GM12878 (cell line): ENCODE measurements at regions of chr2 and their contacts with region 1.

Region 1: GRCh38 chr2:45935791-45936622 is 284.5 kb downstream of the PRKCE start:
- DNase-seq: no peak
- ATAC-seq: peak; percentile 94
- H3K4me3 ChIP-seq: no peak overlapping the region
- H3K27ac ChIP-seq: peak overlapping the region; percentile 48
- H3K4me1 ChIP-seq: peaks cover 7% of the 10 kb centered on the region
- H3K27me3 ChIP-seq: no peaks in the 10 kb centered on the region
- CTCF ChIP-seq: peak; percentile 67 to 91 (median 70)
- EP300 ChIP-seq: no peak
- POLR2A ChIP-seq: no peak
- RAD21 ChIP-seq: peak; percentile 95

Region 2: DNA sequence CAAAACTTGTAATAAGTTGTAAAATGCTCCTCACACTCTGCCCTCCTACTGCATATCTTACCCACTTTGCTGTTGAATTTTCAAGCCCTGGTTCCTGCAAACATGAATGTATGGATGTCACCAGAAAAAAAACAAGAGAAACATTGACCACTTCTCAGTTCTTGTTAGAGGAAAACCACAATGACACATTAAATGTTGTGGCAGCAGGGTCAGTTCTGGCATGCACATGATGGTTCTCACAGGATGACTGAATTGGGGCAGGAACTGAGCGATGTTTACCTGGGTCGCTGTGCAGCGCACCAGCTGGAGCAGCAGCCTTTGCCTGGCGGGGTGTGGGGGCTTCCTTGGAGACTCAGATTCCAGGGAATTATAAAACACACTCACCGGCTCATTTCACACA is 298.6 kb before region 1 on chr2:
- CTCF ChIA-PET with region 1: interaction called, 24 read pairs
- POLR2A ChIA-PET with region 1: no interaction called
- RAD21 ChIA-PET with region 1: interaction called, 39 read pairs
- SMC1A ChIA-PET with region 1: interaction called, 16 read pairs
- in situ Hi-C with region 1: no loop called
- intact Hi-C with region 1: no loop called
- DNase-seq: peak; percentile 41
- ATAC-seq: peak; percentile 96
- H3K4me3 ChIP-seq: no peak overlapping the region
- H3K27ac ChIP-seq: no peak overlapping the region
- H3K4me1 ChIP-seq: no peaks in the 10 kb centered on the region; the same call in 1 of the 2 replicates
- H3K27me3 ChIP-seq: no peaks in the 10 kb centered on the region
- CTCF ChIP-seq: no peak
- EP300 ChIP-seq: peak; percentile 50 to 61; a peak in 3 of 4 replicates
- POLR2A ChIP-seq: no peak
- RAD21 ChIP-seq: no peak

Region 3: DNA sequence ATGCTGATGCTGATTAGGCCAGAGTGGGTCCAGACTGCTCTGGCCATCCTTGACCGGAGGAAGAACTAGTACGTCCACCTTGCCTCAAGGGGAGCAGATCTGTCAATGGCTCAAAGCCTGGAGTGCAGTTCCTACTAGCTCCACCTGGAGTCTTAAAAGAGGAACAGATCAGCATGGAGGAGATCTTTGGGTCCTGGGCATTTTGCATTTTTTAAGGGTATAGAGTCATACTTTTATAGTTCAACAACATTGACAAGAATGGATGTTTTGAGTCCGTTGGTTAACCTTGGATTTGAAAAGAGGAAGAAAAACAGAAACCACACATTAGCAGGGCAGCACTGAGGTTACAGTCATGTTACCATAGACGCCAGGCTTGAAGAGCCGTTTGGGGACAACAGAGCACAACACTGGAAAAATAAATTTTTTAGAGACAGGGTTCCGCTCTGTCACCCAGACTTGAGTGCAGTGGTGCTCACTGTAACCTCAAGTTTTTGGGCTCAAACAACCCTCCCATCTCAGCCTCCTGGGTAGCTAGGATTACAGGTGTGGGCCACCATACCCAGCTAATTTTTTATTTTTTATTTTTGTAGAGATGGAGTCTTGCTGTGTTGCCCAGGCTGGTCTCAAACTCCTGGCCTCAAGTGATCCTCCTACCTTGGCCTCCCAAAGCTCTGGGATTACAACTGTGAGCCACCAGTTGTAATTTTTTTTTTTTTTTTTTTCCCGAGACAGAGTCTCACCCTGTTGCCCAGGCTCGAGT is 206.1 kb before region 1 on chr2:
- CTCF ChIA-PET with region 1: interaction called, 3 read pairs
- POLR2A ChIA-PET with region 1: no interaction called
- RAD21 ChIA-PET with region 1: interaction called, 8 read pairs
- SMC1A ChIA-PET with region 1: interaction called, 6 read pairs
- in situ Hi-C with region 1: no loop called
- intact Hi-C with region 1: loop called (anchors 2 kb)
- DNase-seq: peak; percentile 88
- ATAC-seq: peak; percentile 79
- H3K4me3 ChIP-seq: no peak overlapping the region
- H3K27ac ChIP-seq: peak overlapping the region; percentile 72
- H3K4me1 ChIP-seq: peaks cover 44% of the 10 kb centered on the region
- H3K27me3 ChIP-seq: no peaks in the 10 kb centered on the region
- CTCF ChIP-seq: peak; percentile 43 to 70 (median 55)
- EP300 ChIP-seq: peak; percentile 93
- POLR2A ChIP-seq: no peak; the same call in 1 of the 2 replicates
- RAD21 ChIP-seq: peak; percentile 54

Region 4: DNA sequence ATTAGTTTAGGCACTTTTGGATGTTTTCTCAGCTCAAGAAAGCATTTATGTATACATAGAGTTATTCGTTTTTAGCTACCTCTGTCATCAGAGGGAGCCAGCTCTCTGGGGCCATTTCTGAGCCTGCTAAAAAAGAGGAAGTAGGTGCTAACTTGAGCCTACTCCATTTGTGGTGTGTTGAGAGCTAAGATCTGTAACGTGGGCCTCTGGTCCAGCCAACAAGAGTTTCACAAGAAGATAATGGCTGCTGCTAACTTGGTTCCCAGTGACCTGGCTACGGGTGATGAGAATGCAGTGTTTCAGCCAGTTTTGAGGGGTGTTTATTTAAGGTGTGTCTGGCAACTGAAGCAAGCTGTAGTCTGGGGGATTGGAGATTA is 102.1 kb before region 1 on chr2:
- CTCF ChIA-PET with region 1: interaction called, 66 read pairs
- POLR2A ChIA-PET with region 1: interaction called, 7 read pairs
- RAD21 ChIA-PET with region 1: interaction called, 29 read pairs
- SMC1A ChIA-PET with region 1: interaction called, 68 read pairs
- in situ Hi-C with region 1: no loop called
- intact Hi-C with region 1: loop called (anchors 2 kb)
- DNase-seq: peak; percentile 77
- ATAC-seq: peak; percentile 85
- H3K4me3 ChIP-seq: peak overlapping the region; percentile 39; the same call in 1 of the 2 replicates
- H3K27ac ChIP-seq: peak overlapping the region; percentile 70
- H3K4me1 ChIP-seq: peaks cover 54% of the 10 kb centered on the region
- H3K27me3 ChIP-seq: no peaks in the 10 kb centered on the region
- CTCF ChIP-seq: peak in 2 of 3 experiments; percentile 3 to 15; a peak in 1 of 6 replicates
- EP300 ChIP-seq: no peak
- POLR2A ChIP-seq: peak; percentile 56
- RAD21 ChIP-seq: peak; percentile 29; the same call in 1 of the 2 replicates

Region 5: GRCh38 chr2:45860136-45861121 is 75.6 kb before region 1 on chr2:
- CTCF ChIA-PET with region 1: interaction called, 19 read pairs
- POLR2A ChIA-PET with region 1: interaction called, 3 read pairs
- RAD21 ChIA-PET with region 1: interaction called, 24 read pairs
- SMC1A ChIA-PET with region 1: interaction called, 23 read pairs
- in situ Hi-C with region 1: no loop called
- intact Hi-C with region 1: no loop called
- DNase-seq: no peak
- ATAC-seq: peak; percentile 81
- H3K4me3 ChIP-seq: peak overlapping the region; percentile 60
- H3K27ac ChIP-seq: peak overlapping the region; percentile 76
- H3K4me1 ChIP-seq: peaks cover 28% of the 10 kb centered on the region
- H3K27me3 ChIP-seq: no peaks in the 10 kb centered on the region
- CTCF ChIP-seq: no peak; a peak in 1 of 6 replicates
- EP300 ChIP-seq: peak in 1 of 2 experiments; percentile 21; a peak in 1 of 4 replicates
- POLR2A ChIP-seq: no peak
- RAD21 ChIP-seq: 0 out of 2 replicates have a peak, but pooled peaks have one; percentile 6

Region 6: DNA sequence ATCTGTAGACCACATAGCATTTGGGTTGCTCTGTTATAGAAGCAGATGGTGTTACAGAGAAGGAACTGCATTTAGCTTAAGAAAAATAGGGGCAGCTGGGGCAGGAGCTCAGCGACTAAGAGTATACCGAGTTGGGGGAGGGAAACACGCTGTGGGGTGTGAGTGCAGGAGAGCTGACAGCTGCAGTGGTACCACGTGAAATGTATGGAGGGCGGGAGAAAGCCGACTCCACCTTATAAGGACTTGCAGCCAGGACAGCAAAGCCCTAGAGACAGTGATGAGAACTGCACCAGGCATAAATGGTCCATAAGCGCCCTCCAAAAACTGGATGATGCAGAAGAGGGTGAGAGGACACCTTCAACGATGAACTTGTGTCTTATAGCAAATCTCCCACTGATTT is 47.0 kb before region 1 on chr2:
- CTCF ChIA-PET with region 1: interaction called, 25 read pairs
- POLR2A ChIA-PET with region 1: no interaction called
- RAD21 ChIA-PET with region 1: interaction called, 5 read pairs
- SMC1A ChIA-PET with region 1: interaction called, 21 read pairs
- in situ Hi-C with region 1: no loop called
- intact Hi-C with region 1: loop called (anchors 2 kb)
- DNase-seq: peak; percentile 73
- ATAC-seq: peak; percentile 96
- H3K4me3 ChIP-seq: no peak overlapping the region
- H3K27ac ChIP-seq: peak overlapping the region; percentile 85
- H3K4me1 ChIP-seq: peaks cover 54% of the 10 kb centered on the region
- H3K27me3 ChIP-seq: no peaks in the 10 kb centered on the region
- CTCF ChIP-seq: peak; percentile 31 to 63 (median 51); a peak in 4 of 6 replicates
- EP300 ChIP-seq: peak in 1 of 2 experiments; percentile 47; a peak in 1 of 4 replicates
- POLR2A ChIP-seq: 0 out of 2 replicates have a peak, but pooled peaks have one; percentile 29
- RAD21 ChIP-seq: peak; percentile 13; the same call in 1 of the 2 replicates

Region 7: DNA sequence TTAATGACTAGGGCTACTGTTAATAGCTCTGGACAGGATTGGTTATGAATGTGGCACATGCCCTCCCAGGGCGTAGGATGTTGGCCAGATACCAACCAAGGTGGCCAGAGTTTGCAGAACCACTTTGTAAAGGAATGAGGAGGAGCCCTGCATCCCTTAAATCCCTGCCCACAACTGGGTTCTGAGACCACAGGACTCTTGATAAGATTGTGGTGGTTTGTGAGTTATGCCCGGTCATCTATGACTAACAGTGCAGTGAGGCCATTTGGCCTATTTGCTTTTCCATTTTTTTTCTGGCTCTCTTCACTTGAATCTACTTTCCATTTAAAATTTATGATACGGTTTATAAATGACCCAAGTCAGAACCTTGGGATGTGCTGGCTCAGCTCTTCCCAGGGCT is 10.0 kb after region 1 on chr2:
- CTCF ChIA-PET with region 1: interaction called, 10 read pairs
- POLR2A ChIA-PET with region 1: no interaction called
- RAD21 ChIA-PET with region 1: no interaction called
- SMC1A ChIA-PET with region 1: interaction called, 5 read pairs
- in situ Hi-C with region 1: no loop called
- intact Hi-C with region 1: no loop called
- DNase-seq: no peak
- ATAC-seq: no peak
- H3K4me3 ChIP-seq: no peak overlapping the region
- H3K27ac ChIP-seq: no peak overlapping the region
- H3K4me1 ChIP-seq: no peaks in the 10 kb centered on the region
- H3K27me3 ChIP-seq: no peaks in the 10 kb centered on the region
- CTCF ChIP-seq: no peak
- EP300 ChIP-seq: no peak
- POLR2A ChIP-seq: no peak
- RAD21 ChIP-seq: no peak